ENCODE measurements at regions of chr18 and their contacts with region 1.

Region 1: GRCh38 chr18:63949068-63949737 is at the start of gene HMSD:
- DNase-seq: peak; percentile 57
- ATAC-seq: peak; percentile 93
- H3K4me3 ChIP-seq: peak within 1 kb of the TSS; percentile 89
- H3K27ac ChIP-seq: peak within 1 kb of the TSS; percentile 97
- H3K4me1 ChIP-seq: peaks cover 9% of the 10 kb centered on the region
- H3K27me3 ChIP-seq: no peaks in the 10 kb centered on the region
- CTCF ChIP-seq: peak; percentile 49 to 60 (median 54)
- EP300 ChIP-seq: no peak; a peak in 1 of 4 replicates
- POLR2A ChIP-seq: peak; percentile 76
- RAD21 ChIP-seq: no peak
- polyA plus RNA-seq, gene HMSD: 31.5 to 33.4 TPM

Region 2: GRCh38 chr18:63963615-63964256 is 14.5 kb after region 1 on chr18:
- CTCF ChIA-PET with region 1: interaction called, 45 read pairs
- POLR2A ChIA-PET with region 1: interaction called, 3 read pairs
- RAD21 ChIA-PET with region 1: interaction called, 6 read pairs
- SMC1A ChIA-PET with region 1: interaction called, 29 read pairs
- in situ Hi-C with region 1: no loop called
- intact Hi-C with region 1: no loop called
- DNase-seq: no peak
- ATAC-seq: peak; percentile 83
- H3K4me3 ChIP-seq: no peak overlapping the region
- H3K27ac ChIP-seq: no peak overlapping the region
- H3K4me1 ChIP-seq: no peaks in the 10 kb centered on the region
- H3K27me3 ChIP-seq: no peaks in the 10 kb centered on the region
- CTCF ChIP-seq: peak; percentile 71 to 92 (median 86)
- EP300 ChIP-seq: no peak
- POLR2A ChIP-seq: no peak
- RAD21 ChIP-seq: peak; percentile 57

Region 3: GRCh38 chr18:63969960-63970802 is 21.0 kb after region 1 on chr18 and contains the start of gene SERPINB8:
- CTCF ChIA-PET with region 1: interaction called, 45 read pairs
- POLR2A ChIA-PET with region 1: interaction called, 6 read pairs
- RAD21 ChIA-PET with region 1: interaction called, 3 read pairs
- SMC1A ChIA-PET with region 1: interaction called, 29 read pairs
- in situ Hi-C with region 1: no loop called
- intact Hi-C with region 1: loop called (anchors 2 kb)
- DNase-seq: no peak
- ATAC-seq: peak; percentile 92
- H3K4me3 ChIP-seq: peak within 1 kb of the TSS; percentile 81
- H3K27ac ChIP-seq: peak within 1 kb of the TSS; percentile 89
- H3K4me1 ChIP-seq: peaks cover 6% of the 10 kb centered on the region; the same call in 1 of the 2 replicates
- H3K27me3 ChIP-seq: no peaks in the 10 kb centered on the region
- CTCF ChIP-seq: no peak
- EP300 ChIP-seq: no peak
- POLR2A ChIP-seq: peak; percentile 85
- RAD21 ChIP-seq: no peak
- polyA plus RNA-seq, gene SERPINB8: 8.1 to 13.0 TPM

Region 4: DNA sequence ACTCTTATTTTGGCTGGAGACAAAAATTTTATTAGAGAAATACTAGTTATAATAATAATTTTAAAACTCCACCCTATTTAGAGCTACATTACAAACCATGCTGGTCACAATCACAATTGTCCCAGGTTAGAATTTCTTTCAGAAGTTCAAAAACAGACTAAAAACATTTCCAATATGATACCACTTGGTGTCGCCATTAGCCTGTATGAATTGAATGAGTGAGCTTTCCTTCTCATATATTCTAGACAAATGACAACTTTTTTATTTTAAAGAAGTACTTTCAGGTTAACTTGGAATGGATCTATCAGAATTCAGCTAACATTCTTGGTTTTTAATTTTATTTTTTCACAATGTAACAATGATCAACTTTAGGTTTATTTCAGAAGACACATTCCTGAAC is 68.7 kb after region 1 on chr18:
- CTCF ChIA-PET with region 1: no interaction called
- POLR2A ChIA-PET with region 1: no interaction called
- RAD21 ChIA-PET with region 1: no interaction called
- SMC1A ChIA-PET with region 1: no interaction called
- in situ Hi-C with region 1: no loop called
- intact Hi-C with region 1: no loop called
- DNase-seq: no peak
- ATAC-seq: peak; percentile 68
- H3K4me3 ChIP-seq: no peak overlapping the region
- H3K27ac ChIP-seq: no peak overlapping the region
- H3K4me1 ChIP-seq: no peaks in the 10 kb centered on the region
- H3K27me3 ChIP-seq: no peaks in the 10 kb centered on the region; a peak in 1 of 4 replicates
- CTCF ChIP-seq: peak; percentile 32 to 60 (median 45); a peak in 5 of 6 replicates
- EP300 ChIP-seq: no peak
- POLR2A ChIP-seq: no peak
- RAD21 ChIP-seq: peak; percentile 78

Region 5: DNA sequence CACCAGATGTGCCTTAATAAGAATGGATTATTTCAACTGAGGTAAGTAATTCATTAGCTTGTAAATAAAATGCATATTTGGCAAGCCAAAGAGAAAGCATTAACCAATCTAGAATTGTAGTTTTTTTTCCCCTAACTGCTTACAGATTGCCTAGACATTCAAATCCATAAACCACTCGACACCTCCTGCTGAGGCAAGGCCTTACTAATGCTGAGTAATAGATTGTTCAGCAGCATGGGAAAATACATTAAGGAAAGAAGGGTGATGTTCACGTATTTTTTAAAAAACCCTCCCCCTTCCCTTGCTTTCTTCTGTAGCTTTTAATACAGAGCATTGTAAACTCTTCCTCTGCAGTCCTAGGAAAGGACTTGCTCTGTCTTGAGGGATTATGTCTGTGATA is 216.7 kb after region 1 on chr18:
- CTCF ChIA-PET with region 1: no interaction called
- POLR2A ChIA-PET with region 1: no interaction called
- RAD21 ChIA-PET with region 1: no interaction called
- SMC1A ChIA-PET with region 1: no interaction called
- in situ Hi-C with region 1: no loop called
- intact Hi-C with region 1: no loop called
- DNase-seq: no peak
- ATAC-seq: no peak
- H3K4me3 ChIP-seq: no peak overlapping the region
- H3K27ac ChIP-seq: no peak overlapping the region
- H3K4me1 ChIP-seq: no peaks in the 10 kb centered on the region
- H3K27me3 ChIP-seq: no peaks in the 10 kb centered on the region; a peak in 1 of 4 replicates
- CTCF ChIP-seq: no peak
- EP300 ChIP-seq: no peak
- POLR2A ChIP-seq: no peak
- RAD21 ChIP-seq: no peak